Activated CD4-positive, alpha-beta memory T cell treated with anti-CD3 and anti-CD28 coated beads for 36 hours (primary cell): ENCODE measurements at regions of chr22 and their contacts with region 1.

Region 1: DNA sequence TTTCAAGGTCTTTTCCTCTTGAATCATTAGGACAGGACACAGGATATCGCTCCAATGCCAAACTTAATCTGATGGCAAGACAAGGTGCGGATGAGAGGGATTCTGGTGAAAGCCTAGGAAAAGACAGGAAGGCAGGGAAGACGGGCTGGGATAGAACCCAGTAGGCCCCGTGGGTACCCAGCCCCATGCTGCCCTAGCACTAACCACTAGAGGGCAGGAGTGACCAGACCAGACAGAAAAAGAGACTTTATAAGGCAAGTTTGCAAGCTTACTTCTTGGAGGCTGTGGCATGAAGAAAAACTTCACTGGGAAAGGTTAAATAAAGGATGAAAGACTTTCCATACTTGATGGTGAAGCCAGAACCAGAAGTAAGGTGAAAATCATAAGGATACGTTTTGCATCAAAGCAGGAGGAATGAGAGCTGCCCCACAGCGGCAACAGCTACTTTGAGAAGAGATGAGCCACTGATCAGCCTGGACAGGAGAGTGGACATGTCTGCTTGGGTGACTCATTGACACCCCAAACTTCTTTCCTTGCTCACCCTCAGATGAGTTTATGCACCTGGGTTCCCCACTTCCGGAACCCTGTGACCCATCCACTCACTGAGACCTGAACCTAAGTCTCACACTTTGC is 39.8 kb downstream of the SYN3 start:
- DNase-seq: peak; percentile 55
- H3K4me3 Mint-ChIP-seq: no peak overlapping the region
- H3K27ac Mint-ChIP-seq: no peak overlapping the region
- H3K4me1 Mint-ChIP-seq: peaks cover 2% of the 10 kb centered on the region
- H3K27me3 Mint-ChIP-seq: peaks cover 7% of the 10 kb centered on the region

Region 2: DNA sequence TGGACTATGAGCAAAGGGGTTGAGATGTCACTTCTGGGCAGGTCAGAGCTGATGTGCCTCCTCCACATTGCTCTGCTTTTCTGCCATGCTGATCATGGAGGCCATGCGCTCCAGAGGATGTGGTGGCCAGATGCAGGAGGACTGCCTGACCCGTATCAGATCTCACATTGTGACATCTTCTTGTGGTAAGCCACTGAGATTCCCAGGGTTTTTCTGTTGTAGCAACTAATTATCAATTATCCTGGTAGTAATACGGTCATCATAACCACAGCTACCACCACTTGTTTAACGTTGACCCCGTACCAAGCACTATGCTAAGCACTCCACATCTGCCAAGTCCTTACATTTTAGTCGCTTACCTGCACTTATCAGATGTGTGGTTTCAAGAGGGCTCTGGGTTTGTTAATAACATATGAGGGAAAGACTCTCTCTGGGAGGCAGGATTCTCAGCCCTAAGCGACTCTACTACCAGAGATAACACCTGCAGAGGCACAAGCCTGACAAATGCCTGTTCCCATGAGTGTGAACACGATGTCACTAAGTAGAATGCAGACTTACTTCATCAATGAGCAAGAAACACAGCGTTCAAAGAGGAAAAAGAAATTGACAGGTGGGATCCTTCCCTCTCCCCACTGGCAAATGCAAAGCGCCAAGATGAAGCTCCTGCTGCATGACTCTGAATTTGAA is 280.4 kb before region 1 on chr22:
- CTCF ChIA-PET with region 1: no interaction called
- POLR2A ChIA-PET with region 1: no interaction called
- intact Hi-C with region 1: no loop called
- DNase-seq: no peak
- H3K4me3 Mint-ChIP-seq: no peak overlapping the region
- H3K27ac Mint-ChIP-seq: no peak overlapping the region
- H3K4me1 Mint-ChIP-seq: no peaks in the 10 kb centered on the region
- H3K27me3 Mint-ChIP-seq: peaks cover 13% of the 10 kb centered on the region

Region 3: GRCh38 chr22:33000342-33001280 is 17.7 kb before region 1 on chr22:
- CTCF ChIA-PET with region 1: interaction called, 10 read pairs
- POLR2A ChIA-PET with region 1: no interaction called
- intact Hi-C with region 1: no loop called
- DNase-seq: peak; percentile 48
- H3K4me3 Mint-ChIP-seq: no peak overlapping the region
- H3K27ac Mint-ChIP-seq: no peak overlapping the region
- H3K4me1 Mint-ChIP-seq: peaks cover 2% of the 10 kb centered on the region
- H3K27me3 Mint-ChIP-seq: peaks cover 1% of the 10 kb centered on the region

Region 4: GRCh38 chr22:33049119-33049729 is 30.9 kb after region 1 on chr22:
- CTCF ChIA-PET with region 1: interaction called, 40 read pairs
- POLR2A ChIA-PET with region 1: no interaction called
- intact Hi-C with region 1: loop called (anchors 1 kb)
- DNase-seq: peak; percentile 65
- H3K4me3 Mint-ChIP-seq: no peak overlapping the region
- H3K27ac Mint-ChIP-seq: no peak overlapping the region
- H3K4me1 Mint-ChIP-seq: no peaks in the 10 kb centered on the region
- H3K27me3 Mint-ChIP-seq: peaks cover 25% of the 10 kb centered on the region

Region 5: GRCh38 chr22:33209930-33210784 is 191.8 kb after region 1 on chr22:
- CTCF ChIA-PET with region 1: interaction called, 10 read pairs
- POLR2A ChIA-PET with region 1: no interaction called
- intact Hi-C with region 1: no loop called
- DNase-seq: peak; percentile 13
- H3K4me3 Mint-ChIP-seq: no peak overlapping the region
- H3K27ac Mint-ChIP-seq: no peak overlapping the region
- H3K4me1 Mint-ChIP-seq: no peaks in the 10 kb centered on the region
- H3K27me3 Mint-ChIP-seq: peaks cover 8% of the 10 kb centered on the region